Activated naive CD4-positive, alpha-beta T cell treated with anti-CD3 and anti-CD28 coated beads for 36 hours (primary cell): ENCODE measurements at regions of chr7 and their contacts with region 1.

Region 1: GRCh38 chr7:70920876-70921275 is 211.1 kb upstream of the GALNT17 start:
- DNase-seq: no peak
- H3K4me3 Mint-ChIP-seq: no peak overlapping the region
- H3K27ac Mint-ChIP-seq: no peak overlapping the region
- H3K4me1 Mint-ChIP-seq: no peaks in the 10 kb centered on the region
- H3K27me3 Mint-ChIP-seq: no peaks in the 10 kb centered on the region

Region 2: GRCh38 chr7:70883750-70884439 is 37.0 kb before region 1 on chr7:
- CTCF ChIA-PET with region 1: no interaction called
- intact Hi-C with region 1: loop called (anchors 2 kb)
- DNase-seq: no peak
- H3K4me3 Mint-ChIP-seq: no peak overlapping the region
- H3K27ac Mint-ChIP-seq: no peak overlapping the region
- H3K4me1 Mint-ChIP-seq: no peaks in the 10 kb centered on the region
- H3K27me3 Mint-ChIP-seq: peaks cover 4% of the 10 kb centered on the region